Right ventricle myocardium inferior (tissue), 1 donor: ENCODE measurements at regions of chr11 and their contacts with region 1.

Region 1: GRCh38 chr11:10808553-10809372 is at the start of gene EIF4G2:
- DNase-seq: peak; percentile 99
- ATAC-seq: peak; percentile 98
- total RNA-seq, gene EIF4G2: 752 TPM

Region 2: DNA sequence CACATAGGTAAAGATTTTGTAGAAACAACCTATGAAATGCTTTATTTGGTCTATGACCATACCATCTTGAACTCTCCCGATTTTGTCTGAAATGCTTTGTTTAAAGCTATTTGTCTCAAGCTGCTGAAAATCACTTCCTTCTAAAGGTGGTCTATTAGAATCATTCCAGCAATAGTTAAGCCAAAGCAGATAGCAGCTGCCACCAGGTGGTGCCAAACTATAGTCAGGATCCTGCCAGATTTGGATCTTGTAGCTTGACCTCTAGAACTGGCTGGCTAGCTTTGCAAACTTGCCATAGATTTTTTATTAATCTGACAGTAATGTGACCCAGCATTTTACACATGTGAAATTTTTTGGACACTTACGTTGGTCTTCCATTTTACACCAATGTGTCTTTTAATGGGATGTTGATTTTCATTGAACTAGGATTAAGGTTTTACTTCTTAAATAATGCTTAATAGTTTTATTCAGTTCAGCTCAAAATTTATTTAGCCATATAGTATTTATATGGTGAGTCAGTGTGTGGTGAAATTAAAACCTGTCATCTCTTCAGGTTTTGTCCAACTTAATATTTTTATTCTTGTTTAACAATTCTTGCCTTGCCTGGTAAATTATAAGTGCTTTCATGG is 38.0 kb before region 1 on chr11:
- intact Hi-C with region 1: loop called (anchors 5 kb)
- DNase-seq: no peak
- ATAC-seq: peak; percentile 52

Region 3: DNA sequence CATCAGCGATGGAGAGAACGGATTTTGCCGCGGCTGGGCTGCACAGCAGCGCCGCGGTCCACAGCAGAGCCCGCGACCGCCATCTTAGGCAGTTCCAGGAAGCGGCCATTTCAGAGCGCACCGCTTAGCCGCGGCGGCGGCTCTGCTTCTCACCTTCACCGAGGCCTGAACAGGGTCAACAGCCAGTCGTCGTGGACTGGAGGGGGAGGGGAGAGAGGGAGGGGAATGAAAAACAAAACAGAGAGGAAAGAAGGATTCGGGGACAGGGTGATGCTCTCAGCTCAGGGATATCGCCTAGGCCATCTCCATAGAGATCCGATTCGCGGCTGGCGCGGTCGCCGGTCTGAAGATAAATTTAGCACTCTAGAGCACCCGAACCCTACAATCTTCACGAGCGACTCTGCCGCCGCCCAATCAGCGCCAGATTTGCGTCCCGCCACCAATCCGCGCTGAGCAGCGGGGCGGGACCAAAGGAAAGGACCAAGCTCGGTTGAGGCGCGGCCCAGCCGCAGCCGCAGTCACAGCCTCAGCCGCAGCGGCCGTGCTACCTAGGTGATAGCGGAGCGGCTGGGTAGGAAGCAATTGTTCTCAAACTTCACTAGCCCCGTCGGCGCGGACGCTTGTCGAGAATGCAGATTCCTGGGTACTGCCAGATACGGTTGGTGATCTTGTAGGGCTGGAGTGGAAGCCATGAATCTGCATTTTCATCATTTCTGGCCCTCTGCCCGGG is 49.1 kb after region 1 on chr11 and contains the start of gene ZBED5:
- intact Hi-C with region 1: loop called (anchors 1 kb)
- DNase-seq: peak; percentile 99
- ATAC-seq: peak; percentile 98
- total RNA-seq, gene ZBED5: 42.7 TPM

Region 4: GRCh38 chr11:10899121-10899830 is 90.5 kb after region 1 on chr11:
- intact Hi-C with region 1: loop called (anchors 1 kb)
- DNase-seq: peak; percentile 75
- ATAC-seq: peak; percentile 70

Region 5: DNA sequence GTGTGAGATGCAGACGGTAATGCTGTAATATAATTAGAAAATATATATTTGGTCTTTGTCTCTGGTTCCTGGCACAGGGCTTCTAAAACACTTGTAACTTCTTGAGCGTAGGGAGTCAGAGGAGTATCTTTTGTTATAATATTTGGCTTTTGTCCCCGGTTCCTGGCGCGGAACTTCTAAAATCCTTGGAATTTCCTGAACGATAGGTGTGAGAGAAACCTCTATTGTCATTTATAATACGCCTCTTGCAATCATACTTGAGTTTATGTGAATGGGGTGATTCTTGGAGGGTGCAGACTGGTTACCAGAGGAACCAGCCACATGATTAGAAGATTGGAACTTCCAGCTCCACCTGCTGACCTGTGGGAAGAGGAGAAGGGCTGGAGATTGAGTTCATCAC is 103.1 kb after region 1 on chr11:
- intact Hi-C with region 1: loop called (anchors 2 kb)
- DNase-seq: no peak
- ATAC-seq: peak; percentile 5